PC-3 (cell line): ENCODE measurements at regions of chrX and their contacts with region 1.

Region 1: GRCh38 chrX:11533211-11533651 is 132.5 kb downstream of the ARHGAP6 start:
- DNase-seq: peak; percentile 84
- ATAC-seq: peak; percentile 86
- H3K4me3 ChIP-seq: no peak overlapping the region
- H3K27ac ChIP-seq: no peak overlapping the region
- H3K4me1 ChIP-seq: peaks cover 12% of the 10 kb centered on the region
- H3K27me3 ChIP-seq: no peaks in the 10 kb centered on the region
- CTCF ChIP-seq: peak; percentile 95

Region 2: DNA sequence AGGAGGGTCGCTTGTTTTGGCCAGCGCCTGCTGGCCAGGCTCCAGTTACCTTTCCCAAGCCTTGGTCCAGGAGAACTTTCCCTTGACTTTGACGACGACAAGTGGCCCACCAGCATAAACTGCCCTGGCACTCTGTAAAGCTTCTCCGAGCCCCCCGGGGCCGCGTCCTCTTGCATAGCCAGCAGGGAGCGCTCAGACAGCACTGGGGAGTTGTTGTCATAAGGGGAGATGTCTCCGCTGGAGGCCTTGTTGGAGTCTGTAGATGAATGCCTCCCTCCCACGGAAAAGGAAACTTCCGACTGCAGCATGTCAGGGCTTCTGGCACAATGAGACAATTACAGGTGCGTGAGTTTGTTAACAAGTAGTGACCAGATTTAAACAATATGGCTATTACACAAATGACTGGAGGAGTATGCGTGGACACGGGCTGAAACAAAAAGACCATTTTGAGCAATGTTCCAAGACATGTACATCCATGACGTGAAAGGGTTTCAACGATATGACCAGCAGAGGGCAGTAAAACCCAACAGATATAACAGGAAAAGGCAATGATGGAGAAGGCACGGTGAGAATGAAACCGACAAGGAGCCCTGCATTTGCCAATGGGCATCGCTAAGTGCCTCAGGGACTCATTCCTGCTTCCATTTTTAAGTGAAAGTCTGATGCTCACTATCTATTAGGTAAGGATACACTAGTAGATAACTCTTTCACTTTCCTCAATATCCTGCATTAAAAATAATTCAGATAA is 389.1 kb before region 1 on chrX:
- CTCF ChIA-PET with region 1: no interaction called
- POLR2A ChIA-PET with region 1: no interaction called
- intact Hi-C with region 1: loop called (anchors 1 kb)
- DNase-seq: peak; percentile 91
- ATAC-seq: peak; percentile 88
- H3K4me3 ChIP-seq: peak overlapping the region; percentile 35; the same call in 1 of the 2 replicates
- H3K27ac ChIP-seq: no peak overlapping the region
- H3K4me1 ChIP-seq: no peaks in the 10 kb centered on the region
- H3K27me3 ChIP-seq: no peaks in the 10 kb centered on the region
- CTCF ChIP-seq: peak; percentile 68

Region 3: GRCh38 chrX:11461201-11462001 is 71.8 kb before region 1 on chrX:
- CTCF ChIA-PET with region 1: no interaction called
- POLR2A ChIA-PET with region 1: no interaction called
- intact Hi-C with region 1: loop called (anchors 1 kb)
- DNase-seq: no peak
- ATAC-seq: no peak
- H3K4me3 ChIP-seq: no peak overlapping the region
- H3K27ac ChIP-seq: no peak overlapping the region
- H3K4me1 ChIP-seq: peaks cover 24% of the 10 kb centered on the region
- H3K27me3 ChIP-seq: no peaks in the 10 kb centered on the region
- CTCF ChIP-seq: no peak

Region 4: GRCh38 chrX:11758400-11759171 is 225.4 kb after region 1 on chrX:
- CTCF ChIA-PET with region 1: no interaction called
- POLR2A ChIA-PET with region 1: no interaction called
- intact Hi-C with region 1: loop called (anchors 5 kb)
- DNase-seq: peak; percentile 83
- ATAC-seq: peak; percentile 49
- H3K4me3 ChIP-seq: peak overlapping the region; percentile 84
- H3K27ac ChIP-seq: peak overlapping the region; percentile 50
- H3K4me1 ChIP-seq: peaks cover 33% of the 10 kb centered on the region
- H3K27me3 ChIP-seq: no peaks in the 10 kb centered on the region
- CTCF ChIP-seq: peak; percentile 53

Region 5: DNA sequence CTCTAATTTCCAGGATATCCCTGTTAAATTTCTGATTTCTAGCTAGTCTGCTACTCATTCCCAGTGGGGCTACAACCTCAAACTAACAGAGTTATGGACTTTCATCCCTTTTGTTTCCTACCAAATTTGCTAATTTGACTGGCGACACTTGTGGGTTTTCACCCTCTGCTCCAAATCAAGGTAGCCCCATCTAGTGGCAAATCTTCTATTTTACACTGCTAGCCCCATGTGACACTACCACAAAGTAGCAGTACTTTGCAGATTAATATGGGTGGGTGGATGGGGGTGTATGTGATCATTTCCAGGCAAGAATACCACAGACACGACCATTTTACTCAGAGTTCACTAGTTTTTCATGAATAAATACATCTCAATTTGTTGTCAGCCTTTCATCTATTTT is 375.1 kb after region 1 on chrX:
- CTCF ChIA-PET with region 1: no interaction called
- POLR2A ChIA-PET with region 1: no interaction called
- intact Hi-C with region 1: loop called (anchors 10 kb)
- DNase-seq: peak; percentile 63
- ATAC-seq: peak; percentile 76
- H3K4me3 ChIP-seq: no peak overlapping the region
- H3K27ac ChIP-seq: no peak overlapping the region
- H3K4me1 ChIP-seq: no peaks in the 10 kb centered on the region
- H3K27me3 ChIP-seq: no peaks in the 10 kb centered on the region
- CTCF ChIP-seq: peak; percentile 73